ENCODE measurements at regions of chr9 and their contacts with region 1.

Region 1: GRCh38 chr9:119968836-119969707 is 599.8 kb upstream of the BRINP1 start:
- DNase-seq: peak; percentile 59 to 87 (median 72)
- H3K4me3 ChIP-seq: no peak overlapping the region
- H3K27ac ChIP-seq: no peak overlapping the region
- H3K4me1 ChIP-seq: no peaks in the 10 kb centered on the region
- H3K27me3 ChIP-seq: no peaks in the 10 kb centered on the region
- CTCF ChIP-seq: peak; percentile 37 to 69 (median 41)
- EP300 ChIP-seq: no peak
- POLR2A ChIP-seq: no peak

Region 2: GRCh38 chr9:119509291-119509905 is 459.7 kb before region 1 on chr9:
- intact Hi-C with region 1: no loop called
- DNase-seq: no peak
- H3K4me3 ChIP-seq: no peak overlapping the region
- H3K27ac ChIP-seq: no peak overlapping the region
- H3K4me1 ChIP-seq: no peaks in the 10 kb centered on the region
- H3K27me3 ChIP-seq: no peaks in the 10 kb centered on the region
- CTCF ChIP-seq: no peak
- EP300 ChIP-seq: no peak
- POLR2A ChIP-seq: no peak

Region 3: GRCh38 chr9:120477521-120478001 is 508.5 kb after region 1 on chr9:
- intact Hi-C with region 1: loop called in 1 of 4 experiments (anchors 10 kb)
- DNase-seq: peak; percentile 48 to 76 (median 69)
- H3K4me3 ChIP-seq: no peak overlapping the region
- H3K27ac ChIP-seq: no peak overlapping the region
- H3K4me1 ChIP-seq: peaks cover 2% of the 10 kb centered on the region
- H3K27me3 ChIP-seq: no peaks in the 10 kb centered on the region
- CTCF ChIP-seq: peak; percentile 65 to 79 (median 73)
- EP300 ChIP-seq: no peak
- POLR2A ChIP-seq: no peak